ENCODE measurements at regions of chr12 and their contacts with region 1.

Region 1: DNA sequence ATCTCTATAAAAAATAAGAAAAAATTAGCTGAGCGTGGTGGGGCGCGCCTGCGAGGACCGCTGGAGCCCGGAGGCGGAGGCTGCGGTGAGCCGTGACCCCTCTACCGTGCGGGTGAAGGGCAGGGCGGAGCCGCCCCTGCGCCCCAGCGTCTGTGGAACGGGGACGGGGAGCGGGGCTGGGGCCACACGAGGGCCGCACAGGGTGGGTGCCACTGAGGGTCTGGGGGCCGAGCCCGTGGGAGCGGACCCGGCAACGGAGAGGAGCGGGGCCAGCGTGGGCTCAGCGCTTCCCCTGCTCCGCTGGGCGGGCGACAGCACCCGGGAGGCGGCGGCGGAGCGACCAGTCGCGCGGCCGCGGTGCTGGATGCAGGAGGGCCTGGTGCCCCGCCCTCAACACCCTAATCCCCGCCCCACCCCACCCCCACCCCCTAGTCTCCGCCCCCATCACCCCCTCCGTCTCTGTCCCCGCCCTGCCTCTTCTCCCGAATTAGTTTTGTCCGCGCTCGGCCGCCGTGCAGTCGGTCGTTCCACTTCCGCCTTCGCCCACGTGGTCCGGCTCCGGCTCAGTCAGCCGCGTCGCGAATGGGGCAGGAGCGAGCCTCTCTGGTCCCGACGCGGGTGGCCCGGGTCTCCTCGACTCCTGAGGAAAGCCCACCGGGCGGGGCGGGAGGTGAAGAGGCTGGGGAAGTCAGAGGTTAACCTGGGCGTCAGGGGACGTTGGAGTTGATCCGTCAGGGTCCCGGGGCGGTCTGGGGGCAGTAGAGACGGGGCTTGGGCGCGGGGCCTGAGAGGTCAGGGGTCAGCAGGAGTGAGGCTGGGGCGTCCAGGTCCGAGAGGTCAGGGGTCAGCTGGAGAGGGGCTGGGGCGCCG is at the start of gene PUS1:
- DNase-seq: peak; percentile 96
- ATAC-seq: peak; percentile 95
- total RNA-seq, gene PUS1: 16.3 TPM

Region 2: GRCh38 chr12:131949431-131950181 is 20.7 kb after region 1 on chr12 and contains the start of gene EP400:
- intact Hi-C with region 1: loop called (anchors 1 kb)
- DNase-seq: peak; percentile 98
- ATAC-seq: peak; percentile 99
- total RNA-seq, gene EP400: 56.9 TPM

Region 3: DNA sequence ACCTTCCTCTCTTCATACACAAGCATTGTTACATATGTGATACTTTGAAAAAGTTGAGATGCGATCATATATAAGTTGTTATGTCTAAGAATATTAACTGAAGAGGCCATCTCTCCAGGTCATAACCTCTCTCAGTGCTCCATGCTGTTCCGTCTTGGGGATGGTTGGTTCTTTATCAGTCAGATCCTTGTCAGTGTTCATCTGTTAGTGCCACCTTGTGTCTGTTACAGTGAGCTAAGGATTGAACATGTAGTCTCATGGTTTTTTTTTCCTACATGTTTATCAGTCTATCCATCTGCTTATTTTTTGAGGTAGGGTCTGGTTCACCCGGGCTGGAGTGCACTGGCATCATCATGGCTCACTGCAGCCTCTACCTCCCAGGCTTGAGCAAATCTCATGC is 51.3 kb after region 1 on chr12:
- intact Hi-C with region 1: no loop called
- DNase-seq: no peak
- ATAC-seq: no peak